Aorta (tissue), 5 donors: ENCODE measurements at regions of chr6 and their contacts with region 1.

Region 1: DNA sequence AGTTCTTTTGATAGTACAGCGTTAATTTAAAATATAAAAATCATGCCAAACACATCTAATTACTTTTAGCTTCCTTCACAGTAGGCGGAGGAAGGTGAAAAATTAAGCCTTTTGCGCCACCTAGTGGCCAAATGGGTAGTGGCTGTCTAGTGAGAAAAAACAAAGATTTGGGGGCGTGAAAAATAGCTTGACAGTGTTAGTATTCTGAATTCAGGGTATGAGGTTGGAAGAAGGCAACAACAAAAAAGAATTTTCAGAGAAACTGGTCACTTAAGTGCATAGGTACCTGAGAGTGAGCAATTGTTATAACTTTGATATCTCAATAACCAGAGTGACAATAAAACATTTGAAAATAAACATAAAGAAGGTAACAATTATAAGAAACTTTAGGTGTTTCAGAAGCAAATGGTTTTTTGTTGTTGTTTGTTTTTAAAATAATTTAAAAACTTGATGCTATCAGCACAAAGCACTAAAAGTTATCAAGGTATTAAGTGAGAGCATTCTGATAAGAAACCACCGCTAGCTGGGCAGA is 14.3 kb downstream of the PSMB9 start:
- DNase-seq: peak; percentile 86 to 92
- ATAC-seq: peak; percentile 84
- H3K4me3 ChIP-seq: no peak overlapping the region
- H3K27ac ChIP-seq: no peak overlapping the region
- H3K4me1 ChIP-seq: no peaks in the 10 kb centered on the region
- H3K27me3 ChIP-seq: no peaks in the 10 kb centered on the region

Region 2: GRCh38 chr6:32355018-32355417 is 513.3 kb before region 1 on chr6:
- intact Hi-C with region 1: no loop called
- DNase-seq: no peak
- ATAC-seq: no peak
- H3K4me3 ChIP-seq: no peak overlapping the region
- H3K27ac ChIP-seq: no peak overlapping the region
- H3K4me1 ChIP-seq: no peaks in the 10 kb centered on the region
- H3K27me3 ChIP-seq: no peaks in the 10 kb centered on the region

Region 3: DNA sequence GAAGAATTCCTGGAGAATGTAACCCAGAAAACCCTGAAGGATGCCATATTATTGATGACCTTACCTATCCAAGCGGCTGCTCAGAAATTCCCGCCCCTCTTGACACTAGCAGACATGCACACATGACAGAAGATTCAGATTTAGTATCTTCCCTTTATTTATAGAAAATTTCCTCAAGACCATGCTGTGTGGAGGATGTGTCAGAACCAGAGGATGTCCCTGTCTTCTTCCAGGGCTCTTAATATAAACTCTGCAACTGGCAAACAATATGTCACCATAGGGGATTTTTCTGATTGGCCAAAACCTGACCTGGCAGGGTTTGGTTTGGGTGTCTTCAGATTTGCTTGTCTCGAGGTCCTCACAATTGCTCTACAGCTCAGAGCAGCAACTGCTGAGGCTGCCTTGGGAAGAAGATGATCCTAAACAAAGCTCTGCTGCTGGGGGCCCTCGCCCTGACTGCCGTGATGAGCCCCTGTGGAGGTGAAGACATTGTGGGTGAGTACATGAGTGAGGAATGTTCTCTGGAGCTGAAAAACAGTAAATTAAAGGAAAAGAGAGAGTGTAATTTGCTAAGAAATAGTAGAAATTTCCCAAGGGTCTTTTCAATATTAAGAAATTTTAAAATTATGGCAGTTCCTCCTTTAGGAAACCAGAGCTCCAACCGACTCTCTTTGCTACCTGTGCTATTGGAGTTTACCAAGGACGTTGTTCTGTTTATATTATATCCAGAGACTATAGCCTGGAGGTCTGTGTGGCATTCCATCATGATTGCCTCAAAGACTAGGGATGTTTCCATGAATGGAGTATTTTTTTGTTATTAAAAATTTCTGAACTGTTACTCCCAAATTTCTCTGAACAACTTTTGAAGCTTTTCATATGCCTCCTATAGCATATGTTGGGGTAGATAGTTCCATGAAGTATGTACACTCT is 127.0 kb before region 1 on chr6 and contains the start of gene HLA-DQA2:
- intact Hi-C with region 1: no loop called
- DNase-seq: no peak
- ATAC-seq: no peak
- H3K4me3 ChIP-seq: no peak within 1 kb of the TSS
- H3K27ac ChIP-seq: no peak within 1 kb of the TSS
- H3K4me1 ChIP-seq: no peaks in the 10 kb centered on the region
- H3K27me3 ChIP-seq: peaks cover 0 to 2% of the 10 kb centered on the region in 2 donors
- total RNA-seq, gene HLA-DQA2: 2.2 to 18.5 TPM

Region 4: GRCh38 chr6:32825966-32826365 is 42.4 kb before region 1 on chr6:
- intact Hi-C with region 1: loop called (anchors 5 kb)
- DNase-seq: no peak
- ATAC-seq: peak; percentile 62
- H3K4me3 ChIP-seq: no peak overlapping the region
- H3K27ac ChIP-seq: no peak overlapping the region
- H3K4me1 ChIP-seq: no peaks in the 10 kb centered on the region
- H3K27me3 ChIP-seq: no peaks in the 10 kb centered on the region

Region 5: DNA sequence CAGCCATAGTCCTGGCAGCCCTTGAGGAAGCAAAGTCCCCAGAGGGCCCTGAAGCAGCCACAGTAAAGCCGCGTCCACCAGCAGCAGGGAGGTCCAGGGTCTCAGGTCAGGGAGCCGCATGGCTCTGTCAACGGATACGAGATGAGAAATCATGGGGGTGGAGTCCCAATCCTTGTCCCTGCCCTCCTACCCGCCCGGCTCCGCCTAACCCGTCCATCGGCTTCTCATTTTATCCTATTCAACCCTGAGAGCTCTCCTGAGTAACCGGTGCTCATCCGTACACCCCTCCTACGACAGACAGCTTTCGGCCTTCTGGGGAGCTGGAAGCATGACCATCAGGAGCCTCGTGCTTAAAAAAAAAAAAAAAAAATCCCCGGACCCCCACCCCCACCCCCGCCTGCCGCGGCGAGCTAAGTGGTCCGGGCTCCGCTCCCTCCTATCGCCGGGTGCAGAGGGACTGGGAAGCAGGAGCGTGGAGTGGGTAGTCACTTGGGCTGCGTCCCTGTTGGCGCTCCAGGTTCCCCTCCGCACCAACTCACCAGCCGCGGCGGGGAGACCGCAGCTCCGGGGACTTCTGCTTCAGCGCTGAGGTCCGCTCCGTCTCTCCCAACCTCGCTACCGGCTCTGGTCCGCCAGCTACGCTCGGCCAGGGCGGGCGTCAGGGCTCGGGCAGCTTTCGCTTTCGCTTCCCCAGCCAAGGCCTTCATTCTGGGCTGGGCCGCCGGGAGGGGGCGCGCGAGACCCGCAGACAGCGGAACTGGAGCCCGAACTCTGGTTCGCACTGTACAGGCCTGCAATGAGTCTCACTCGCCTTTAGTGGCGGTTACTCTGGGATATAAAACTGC is 30.0 kb before region 1 on chr6 and contains the start of gene TAP2:
- intact Hi-C with region 1: loop called (anchors 1 to 5 kb)
- DNase-seq: peak; percentile 98 to 99
- ATAC-seq: peak; percentile 98
- H3K4me3 ChIP-seq: peak within 1 kb of the TSS; percentile 52 to 83
- H3K27ac ChIP-seq: peak within 1 kb of the TSS in 1 of 2 donors; percentile 58
- H3K4me1 ChIP-seq: no peaks in the 10 kb centered on the region
- H3K27me3 ChIP-seq: no peaks in the 10 kb centered on the region
- total RNA-seq, gene TAP2: 26.5 to 48.1 TPM

Region 6: DNA sequence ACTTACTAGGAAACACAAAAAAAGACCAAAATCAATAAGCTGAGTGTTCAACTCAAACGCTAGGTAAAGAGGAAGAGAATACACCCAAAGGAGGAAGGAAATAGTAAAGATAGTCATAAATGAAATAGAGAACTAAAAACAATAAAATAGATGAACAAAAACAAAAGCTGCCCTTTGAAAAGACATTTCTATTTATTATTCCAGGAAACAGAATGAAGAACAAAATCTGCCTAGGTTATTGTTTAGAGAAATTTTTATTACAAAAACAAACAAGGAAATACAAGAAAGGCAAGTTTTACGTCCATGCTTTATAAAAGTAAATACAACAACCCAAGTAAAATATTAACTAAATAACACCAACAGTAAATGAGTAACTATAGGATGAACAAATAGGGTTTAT is 52.4 kb after region 1 on chr6:
- intact Hi-C with region 1: no loop called
- DNase-seq: no peak
- ATAC-seq: no peak
- H3K4me3 ChIP-seq: no peak overlapping the region
- H3K27ac ChIP-seq: no peak overlapping the region
- H3K4me1 ChIP-seq: no peaks in the 10 kb centered on the region
- H3K27me3 ChIP-seq: no peaks in the 10 kb centered on the region